HEK293 (cell line): ENCODE measurements at regions of chr6 and their contacts with region 1.

Region 1: GRCh38 chr6:52566853-52567279 is 10.0 kb downstream of the TRAM2 start:
- H3K4me3 ChIP-seq: no peak overlapping the region
- H3K27ac ChIP-seq: no peak overlapping the region
- H3K4me1 ChIP-seq: peaks cover 17% of the 10 kb centered on the region
- CTCF ChIP-seq: no peak

Region 2: GRCh38 chr6:52577022-52577777 is 10.3 kb after region 1 on chr6 and contains the start of gene TRAM2:
- CTCF ChIA-PET with region 1: interaction called, 14 read pairs
- POLR2A ChIA-PET with region 1: interaction called, 5 read pairs
- H3K4me3 ChIP-seq: peak within 1 kb of the TSS; percentile 67
- H3K27ac ChIP-seq: peak within 1 kb of the TSS; percentile 97
- H3K4me1 ChIP-seq: peaks cover 9% of the 10 kb centered on the region
- CTCF ChIP-seq: no peak